Esophagus muscularis mucosa (tissue), 4 donors: ENCODE measurements at regions of chr3 and their contacts with region 1.

Region 1: GRCh38 chr3:148955544-148956346 is 35.6 kb upstream of the GYG1 start:
- DNase-seq: no peak
- H3K4me3 ChIP-seq: no peak overlapping the region
- H3K27ac ChIP-seq: peak overlapping the region; percentile 85 to 93 (median 88)
- H3K4me1 ChIP-seq: peaks cover 2 to 37% (median 31%) of the 10 kb centered on the region in 4 donors
- H3K27me3 ChIP-seq: no peaks in the 10 kb centered on the region
- CTCF ChIP-seq: peak; percentile 58 to 63 (median 63)
- EP300 ChIP-seq: no peak
- POLR2A ChIP-seq: no peak

Region 2: DNA sequence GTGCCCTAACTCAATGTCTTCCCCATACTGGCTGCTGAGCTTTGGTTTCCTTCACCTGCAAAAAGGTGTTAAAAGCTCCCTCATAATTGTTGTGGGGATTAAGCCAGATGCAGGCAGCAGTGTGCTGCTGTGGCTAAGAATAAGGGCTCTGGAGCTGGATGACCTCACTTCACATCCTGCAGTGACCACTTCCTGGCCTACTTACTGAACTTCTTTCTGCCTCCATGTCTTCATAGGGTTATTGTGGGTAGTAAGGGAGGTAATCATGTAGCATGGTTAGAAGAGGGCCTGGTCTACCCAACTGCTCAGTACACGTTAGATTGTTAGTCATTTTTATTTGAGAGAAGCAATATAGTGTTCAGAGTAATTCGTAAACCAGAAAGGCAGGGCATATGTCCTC is 54.0 kb after region 1 on chr3:
- intact Hi-C with region 1: loop called (anchors 10 kb)
- DNase-seq: no peak
- H3K4me3 ChIP-seq: no peak overlapping the region
- H3K27ac ChIP-seq: peak overlapping the region; percentile 71 to 81 (median 72)
- H3K4me1 ChIP-seq: peaks cover 10 to 49% (median 44%) of the 10 kb centered on the region in 4 donors
- H3K27me3 ChIP-seq: no peaks in the 10 kb centered on the region
- CTCF ChIP-seq: no peak
- EP300 ChIP-seq: no peak
- POLR2A ChIP-seq: no peak

Region 3: DNA sequence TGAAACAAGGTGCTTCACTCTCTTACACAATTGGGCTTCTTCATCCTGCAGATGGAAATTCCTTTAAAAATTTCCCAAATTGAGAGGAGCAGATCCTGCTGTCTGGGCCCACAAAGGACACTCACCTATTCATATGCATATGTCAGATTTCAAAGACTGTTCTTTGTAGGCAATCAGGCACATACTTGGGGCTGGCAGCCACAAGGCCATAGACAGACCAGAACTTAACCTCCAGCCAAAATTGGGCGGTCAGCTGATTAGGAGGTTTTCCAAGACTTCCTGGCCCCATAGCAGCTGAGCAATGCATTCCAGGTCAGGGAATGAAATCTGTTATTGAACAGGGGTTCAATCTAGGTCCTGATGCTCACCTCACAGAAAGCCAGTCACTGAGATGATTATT is 158.7 kb after region 1 on chr3:
- intact Hi-C with region 1: loop called (anchors 5 kb)
- DNase-seq: no peak
- H3K4me3 ChIP-seq: no peak overlapping the region
- H3K27ac ChIP-seq: no peak overlapping the region
- H3K4me1 ChIP-seq: peaks cover 5 to 11% (median 9%) of the 10 kb centered on the region in 4 donors
- H3K27me3 ChIP-seq: no peaks in the 10 kb centered on the region
- CTCF ChIP-seq: no peak
- EP300 ChIP-seq: no peak
- POLR2A ChIP-seq: no peak

Region 4: GRCh38 chr3:149273096-149273751 is 317.5 kb after region 1 on chr3:
- intact Hi-C with region 1: loop called (anchors 1 kb)
- DNase-seq: no peak
- H3K4me3 ChIP-seq: no peak overlapping the region
- H3K27ac ChIP-seq: no peak overlapping the region
- H3K4me1 ChIP-seq: peaks cover 0 to 15% (median 11%) of the 10 kb centered on the region in 4 donors
- H3K27me3 ChIP-seq: no peaks in the 10 kb centered on the region
- CTCF ChIP-seq: peak; percentile 92 to 97 (median 95)
- EP300 ChIP-seq: no peak
- POLR2A ChIP-seq: no peak